HepG2 (cell line): ENCODE measurements at regions of chr18 and their contacts with region 1.

Region 1: DNA sequence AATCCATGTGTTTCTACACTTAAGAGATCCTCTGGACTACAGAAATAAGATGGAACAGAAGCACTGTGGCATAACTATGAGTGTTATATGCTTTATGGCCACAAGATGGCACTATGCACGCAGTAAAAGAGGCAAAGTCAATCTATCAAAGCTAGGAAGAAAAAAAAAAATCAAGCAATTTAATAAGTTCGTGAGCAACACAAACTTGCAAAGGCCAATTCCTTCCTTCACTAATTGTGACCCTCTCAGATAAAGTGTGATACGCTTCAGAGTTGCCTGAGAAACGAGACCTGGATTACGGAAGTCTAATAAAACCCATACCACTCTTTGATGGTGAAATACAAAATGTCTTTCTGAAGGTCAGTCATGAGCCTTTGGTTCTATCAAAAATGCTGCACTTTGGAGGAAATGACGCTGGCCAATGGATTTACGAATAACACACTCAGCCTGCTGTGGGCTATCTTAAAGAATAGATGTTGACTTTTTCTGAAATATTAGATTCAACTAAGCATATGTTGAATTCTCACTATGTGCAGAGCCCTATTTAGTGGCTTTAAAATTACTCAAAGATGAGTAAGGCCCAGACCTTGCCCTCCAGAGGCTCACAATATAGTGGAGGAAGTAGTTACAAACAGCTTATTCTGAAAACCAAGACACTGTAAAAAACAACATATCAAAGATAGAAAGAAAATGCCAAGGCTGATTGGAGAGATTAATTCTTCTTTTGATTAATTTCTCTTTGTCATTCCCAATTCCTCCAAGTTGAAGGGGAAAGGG is 35.5 kb upstream of the TTR start:
- DNase-seq: peak; percentile 58
- ATAC-seq: peak; percentile 53
- H3K4me3 ChIP-seq: peak overlapping the region in 2 of 3 experiments; percentile 10 to 36; a peak in 1 of 6 replicates
- H3K27ac ChIP-seq: no peak overlapping the region
- H3K4me1 ChIP-seq: peaks cover 55% of the 10 kb centered on the region
- H3K27me3 ChIP-seq: no peaks in the 10 kb centered on the region
- CTCF ChIP-seq: peak; percentile 85
- EP300 ChIP-seq: no peak
- POLR2A ChIP-seq: no peak
- RAD21 ChIP-seq: peak; percentile 82

Region 2: DNA sequence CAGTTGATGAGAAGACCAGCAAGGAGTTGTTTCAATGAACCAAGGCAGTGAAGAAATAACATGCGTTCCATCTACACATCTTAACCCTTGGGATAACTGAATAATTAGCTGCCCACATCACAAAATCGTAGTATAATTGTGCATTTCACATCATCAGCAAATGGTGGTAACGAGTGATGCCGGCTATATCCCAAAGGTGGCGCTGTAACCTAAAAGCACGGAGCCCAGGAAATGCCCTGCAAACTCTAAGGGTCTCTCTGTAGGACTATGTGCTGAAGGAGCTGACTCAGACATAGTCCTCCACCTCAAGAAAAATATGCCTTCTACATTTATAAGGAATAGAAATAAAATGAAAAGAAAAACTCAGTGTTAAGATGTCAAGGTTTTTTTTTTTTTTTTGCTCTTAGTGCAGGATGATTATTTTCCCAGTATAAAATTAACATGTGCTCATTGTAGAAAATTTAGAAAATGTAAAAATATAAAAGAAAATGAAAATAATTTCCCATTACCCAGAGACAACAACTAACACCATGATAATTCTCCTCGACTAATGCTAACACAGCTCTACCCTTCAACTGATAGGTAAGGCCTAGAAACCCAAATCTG is 131.7 kb before region 1 on chr18:
- CTCF ChIA-PET with region 1: no interaction called
- POLR2A ChIA-PET with region 1: no interaction called
- in situ Hi-C with region 1: no loop called
- intact Hi-C with region 1: loop called (anchors 2 kb)
- DNase-seq: peak; percentile 10
- ATAC-seq: peak; percentile 76; the same call in 2 of the 3 replicates
- H3K4me3 ChIP-seq: no peak overlapping the region
- H3K27ac ChIP-seq: no peak overlapping the region
- H3K4me1 ChIP-seq: peaks cover 8% of the 10 kb centered on the region; the same call in 1 of the 2 replicates
- H3K27me3 ChIP-seq: no peaks in the 10 kb centered on the region
- CTCF ChIP-seq: peak; percentile 81
- EP300 ChIP-seq: no peak
- POLR2A ChIP-seq: no peak
- RAD21 ChIP-seq: peak; percentile 52

Region 3: GRCh38 chr18:31512203-31512764 is 43.9 kb before region 1 on chr18:
- CTCF ChIA-PET with region 1: no interaction called
- POLR2A ChIA-PET with region 1: interaction called, 5 read pairs
- in situ Hi-C with region 1: no loop called
- intact Hi-C with region 1: loop called (anchors 5 kb)
- DNase-seq: peak; percentile 97
- ATAC-seq: peak; percentile 93
- H3K4me3 ChIP-seq: no peak overlapping the region; a peak in 1 of 6 replicates
- H3K27ac ChIP-seq: peak overlapping the region; percentile 66
- H3K4me1 ChIP-seq: peaks cover 58% of the 10 kb centered on the region
- H3K27me3 ChIP-seq: no peaks in the 10 kb centered on the region
- CTCF ChIP-seq: no peak
- EP300 ChIP-seq: peak; percentile 93 to 94; a peak in 3 of 4 replicates
- POLR2A ChIP-seq: no peak
- RAD21 ChIP-seq: no peak

Region 4: DNA sequence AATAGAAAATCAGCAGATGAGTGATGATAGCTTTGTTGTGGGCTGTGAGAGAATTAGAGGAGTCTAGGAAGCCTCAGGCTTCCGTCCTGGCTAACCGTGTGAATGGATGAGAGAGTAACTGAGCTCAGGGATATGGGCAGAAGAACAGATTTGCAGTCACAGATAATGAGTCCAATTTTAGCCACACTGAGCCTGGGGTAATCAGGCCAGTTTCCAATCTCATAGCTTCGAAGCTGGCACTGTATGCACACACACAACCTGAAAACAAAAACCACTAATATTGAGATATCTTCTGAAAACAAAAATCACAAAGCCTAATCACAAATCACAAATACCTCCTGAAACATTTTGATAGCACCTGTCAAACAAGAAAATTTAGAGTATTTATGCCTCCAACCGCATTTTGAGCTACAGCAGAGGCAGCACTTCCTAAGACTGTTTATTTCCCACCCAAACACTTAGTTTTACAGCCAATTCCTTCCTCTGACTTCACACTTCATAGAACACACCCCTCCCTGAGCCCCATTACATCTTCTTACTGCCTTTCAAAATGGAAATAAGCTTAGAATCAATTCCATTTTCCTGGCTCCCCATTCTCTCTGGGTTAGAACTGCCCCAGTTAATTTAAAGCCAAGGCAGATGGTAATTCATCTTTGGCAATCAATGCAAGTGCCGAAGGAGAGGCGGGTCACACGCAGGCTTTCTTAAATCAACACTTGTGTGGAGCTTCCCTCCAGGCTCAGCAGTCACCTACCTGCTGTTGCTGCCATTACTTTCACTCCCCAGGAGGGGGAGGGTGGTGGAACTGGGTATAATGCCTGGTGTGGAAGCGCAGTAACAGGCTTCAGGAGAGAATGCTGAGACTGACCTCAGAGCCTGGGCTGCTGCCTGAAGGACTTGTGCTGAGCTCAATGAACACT is 54.4 kb after region 1 on chr18:
- CTCF ChIA-PET with region 1: no interaction called
- POLR2A ChIA-PET with region 1: interaction called, 3 read pairs
- in situ Hi-C with region 1: no loop called
- intact Hi-C with region 1: loop called (anchors 1 kb)
- DNase-seq: peak; percentile 61
- ATAC-seq: peak; percentile 92
- H3K4me3 ChIP-seq: no peak overlapping the region
- H3K27ac ChIP-seq: no peak overlapping the region
- H3K4me1 ChIP-seq: peaks cover 81% of the 10 kb centered on the region
- H3K27me3 ChIP-seq: no peaks in the 10 kb centered on the region
- CTCF ChIP-seq: peak; percentile 50
- EP300 ChIP-seq: no peak
- POLR2A ChIP-seq: no peak
- RAD21 ChIP-seq: peak; percentile 19; the same call in 1 of the 2 replicates

Region 5: DNA sequence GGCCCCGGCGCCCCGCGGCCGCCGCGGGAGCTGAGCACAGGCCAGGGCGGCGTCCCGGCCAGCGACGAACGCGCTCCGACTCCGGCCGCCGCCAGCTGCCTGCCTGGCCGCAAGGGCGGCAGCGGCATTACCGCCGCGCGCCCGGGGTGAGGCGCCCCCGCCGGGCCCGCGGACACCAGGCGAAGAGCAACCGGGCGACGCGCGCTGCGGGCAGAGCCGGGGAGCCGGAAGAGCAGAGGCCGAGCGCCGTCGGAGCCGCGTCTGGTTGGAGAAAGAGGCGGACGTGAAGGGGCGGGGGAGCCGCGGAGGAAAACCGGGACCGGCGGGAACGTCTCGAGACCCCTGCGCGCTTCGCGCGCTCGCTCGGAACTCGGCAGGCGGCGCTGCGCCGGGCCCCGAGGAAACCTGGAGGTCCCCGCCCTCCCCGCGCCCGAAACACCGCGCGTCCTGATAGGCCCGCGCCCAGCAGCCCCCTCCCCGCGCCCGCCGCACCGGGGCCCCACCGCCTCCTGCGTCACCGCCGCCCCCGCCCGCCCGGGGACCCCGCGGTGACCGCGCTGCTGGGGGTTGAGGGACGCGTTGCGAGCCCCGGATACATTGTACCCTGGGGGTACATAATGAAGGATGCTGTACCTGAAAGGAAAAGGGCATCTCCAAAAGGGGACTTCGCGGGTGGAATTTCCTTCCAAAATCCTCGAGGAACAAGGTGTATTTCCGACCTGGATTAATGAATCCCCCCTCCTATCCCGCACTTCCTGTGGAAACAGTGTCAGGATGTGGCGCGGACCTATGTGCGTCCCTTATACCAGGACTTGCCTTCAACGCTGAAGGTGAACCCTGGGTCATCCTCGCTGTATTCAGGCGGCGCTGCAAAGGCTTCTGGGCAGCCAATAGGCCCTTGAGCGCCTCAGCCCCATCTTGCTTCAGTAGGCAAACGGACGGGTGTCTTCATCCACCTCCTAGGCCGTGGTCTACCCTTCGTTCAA is 129.2 kb after region 1 on chr18:
- CTCF ChIA-PET with region 1: no interaction called
- POLR2A ChIA-PET with region 1: no interaction called
- in situ Hi-C with region 1: no loop called
- intact Hi-C with region 1: loop called (anchors 2 kb)
- DNase-seq: peak; percentile 54
- ATAC-seq: peak; percentile 94
- H3K4me3 ChIP-seq: peak overlapping the region; percentile 48 to 72 (median 64)
- H3K27ac ChIP-seq: peak overlapping the region; percentile 59
- H3K4me1 ChIP-seq: peaks cover 33% of the 10 kb centered on the region
- H3K27me3 ChIP-seq: 0 out of 5 replicates have a peak, but pooled peaks cover 1 to 3% of the 10 kb centered on the region in 2 experiments
- CTCF ChIP-seq: peak; percentile 69
- EP300 ChIP-seq: no peak
- POLR2A ChIP-seq: peak; percentile 50 to 54; a peak in 3 of 4 replicates
- RAD21 ChIP-seq: peak; percentile 69

Region 6: DNA sequence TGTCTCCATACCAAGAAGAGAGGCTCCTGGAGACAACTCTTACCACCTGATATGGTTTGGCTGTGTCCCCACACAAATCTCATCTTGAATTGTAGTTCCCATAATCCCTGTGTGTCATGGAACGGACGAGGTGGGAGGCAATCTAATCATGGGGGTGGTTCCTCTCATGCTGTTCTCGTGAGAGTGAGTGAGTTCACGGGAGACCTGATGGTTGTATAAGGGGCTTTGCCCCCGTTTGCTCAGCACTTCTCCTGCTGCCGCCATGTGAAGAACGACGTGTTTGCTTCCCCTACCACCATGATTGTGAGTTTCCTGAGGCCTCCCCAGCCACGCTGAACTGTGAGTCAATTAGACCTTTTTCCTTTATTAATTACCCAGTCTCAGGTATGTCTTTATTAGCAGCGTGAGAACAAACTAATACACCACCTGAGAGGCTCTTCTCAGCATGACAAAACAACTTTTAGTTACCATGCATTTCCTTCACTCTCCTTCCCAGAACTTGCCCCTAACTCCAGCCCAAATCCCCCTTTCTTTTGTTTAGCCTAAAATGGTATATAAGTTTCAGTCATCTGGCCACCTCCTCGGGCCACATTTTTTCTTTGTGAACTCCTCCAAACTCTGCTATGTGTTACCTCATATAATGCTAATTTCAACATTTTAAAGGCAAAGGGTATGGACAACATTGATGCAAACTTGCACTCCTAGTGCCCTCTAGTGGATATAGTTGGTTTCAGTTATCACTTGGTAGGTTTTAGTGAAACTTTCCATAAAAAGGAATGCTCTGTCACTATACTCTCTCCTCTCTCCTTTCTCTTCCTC is 263.2 kb after region 1 on chr18:
- CTCF ChIA-PET with region 1: interaction called, 12 read pairs
- POLR2A ChIA-PET with region 1: no interaction called
- in situ Hi-C with region 1: loop called (anchors 10 kb)
- intact Hi-C with region 1: loop called (anchors 1 kb)
- DNase-seq: peak; percentile 59
- ATAC-seq: peak; percentile 81
- H3K4me3 ChIP-seq: no peak overlapping the region
- H3K27ac ChIP-seq: no peak overlapping the region
- H3K4me1 ChIP-seq: peaks cover 15% of the 10 kb centered on the region
- H3K27me3 ChIP-seq: no peaks in the 10 kb centered on the region
- CTCF ChIP-seq: peak; percentile 81
- EP300 ChIP-seq: no peak
- POLR2A ChIP-seq: no peak
- RAD21 ChIP-seq: peak; percentile 49; the same call in 1 of the 2 replicates